GM12878 (cell line): ENCODE measurements at regions of chr17 and their contacts with region 1.

Region 1: DNA sequence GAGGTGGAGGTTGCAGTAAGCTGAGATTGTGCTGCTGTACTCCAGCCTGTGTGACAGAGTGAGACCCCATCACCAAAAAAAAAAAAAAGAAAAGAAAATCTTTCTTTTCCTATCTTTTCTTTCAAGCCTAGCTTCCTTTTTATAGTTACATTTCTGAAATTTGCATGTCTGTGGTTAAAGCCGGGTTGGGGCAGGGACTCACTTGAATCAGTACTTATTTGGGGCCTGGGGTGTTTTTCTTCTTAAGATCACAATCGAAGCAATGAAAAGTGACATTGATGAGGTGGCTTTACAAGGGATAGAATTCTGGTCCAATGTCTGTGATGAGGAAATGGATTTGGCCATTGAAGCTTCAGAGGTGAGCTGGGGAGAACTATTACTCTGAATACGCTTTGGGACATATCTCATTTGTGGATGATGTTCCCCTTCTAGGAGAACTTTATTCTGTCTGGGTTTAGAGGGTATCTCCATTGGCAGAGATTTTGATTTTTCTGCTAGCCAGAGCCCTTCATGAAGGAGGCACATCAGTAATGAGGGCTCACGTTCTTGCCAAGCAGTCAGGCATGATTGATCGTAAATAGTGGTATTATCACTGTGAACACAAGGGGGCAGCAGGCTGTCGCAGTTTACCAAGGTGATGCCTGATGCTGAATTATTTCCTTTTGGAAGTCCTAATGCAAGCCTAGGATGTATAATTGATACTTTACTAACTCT is 14.3 kb downstream of the KPNB1 start:
- DNase-seq: peak; percentile 41
- ATAC-seq: peak; percentile 84
- H3K4me3 ChIP-seq: 0 out of 2 replicates have a peak overlapping the region, but pooled peaks have one; percentile 35
- H3K27ac ChIP-seq: peak overlapping the region; percentile 50
- H3K4me1 ChIP-seq: peaks cover 32% of the 10 kb centered on the region
- H3K27me3 ChIP-seq: no peaks in the 10 kb centered on the region
- CTCF ChIP-seq: peak; percentile 71 to 87 (median 72)
- EP300 ChIP-seq: no peak
- POLR2A ChIP-seq: peak; percentile 56; the same call in 1 of the 2 replicates
- RAD21 ChIP-seq: peak; percentile 55

Region 2: DNA sequence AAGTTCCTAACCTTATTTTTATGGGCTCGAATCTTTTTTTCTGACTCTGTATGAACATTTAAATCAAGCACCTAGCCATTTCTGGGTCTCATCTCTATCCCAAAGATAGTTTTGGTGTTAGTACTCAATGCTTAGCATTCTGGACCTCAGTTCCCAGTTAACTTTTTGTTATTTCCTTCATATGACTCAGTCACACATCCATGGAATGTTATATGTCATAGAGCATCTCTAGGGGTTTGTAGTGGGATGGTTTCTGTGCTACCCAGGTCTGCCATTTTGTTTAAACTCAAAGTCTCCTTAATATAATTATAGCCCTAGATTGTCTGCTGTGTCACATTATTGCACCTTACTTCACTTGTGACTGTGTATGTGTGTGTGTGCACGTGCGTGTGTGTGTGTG is 250.2 kb before region 1 on chr17:
- CTCF ChIA-PET with region 1: no interaction called
- POLR2A ChIA-PET with region 1: no interaction called
- RAD21 ChIA-PET with region 1: no interaction called
- SMC1A ChIA-PET with region 1: no interaction called
- in situ Hi-C with region 1: no loop called
- intact Hi-C with region 1: no loop called
- DNase-seq: no peak
- ATAC-seq: no peak
- H3K4me3 ChIP-seq: no peak overlapping the region
- H3K27ac ChIP-seq: no peak overlapping the region
- H3K4me1 ChIP-seq: no peaks in the 10 kb centered on the region
- H3K27me3 ChIP-seq: no peaks in the 10 kb centered on the region
- CTCF ChIP-seq: no peak
- EP300 ChIP-seq: no peak
- POLR2A ChIP-seq: no peak
- RAD21 ChIP-seq: no peak

Region 3: GRCh38 chr17:47675380-47676198 is 11.5 kb after region 1 on chr17:
- CTCF ChIA-PET with region 1: interaction called, 47 read pairs
- POLR2A ChIA-PET with region 1: interaction called, 3 read pairs
- RAD21 ChIA-PET with region 1: interaction called, 5 read pairs
- SMC1A ChIA-PET with region 1: interaction called, 7 read pairs
- in situ Hi-C with region 1: no loop called
- intact Hi-C with region 1: no loop called
- DNase-seq: no peak
- ATAC-seq: no peak
- H3K4me3 ChIP-seq: no peak overlapping the region
- H3K27ac ChIP-seq: no peak overlapping the region
- H3K4me1 ChIP-seq: no peaks in the 10 kb centered on the region
- H3K27me3 ChIP-seq: no peaks in the 10 kb centered on the region
- CTCF ChIP-seq: no peak
- EP300 ChIP-seq: no peak
- POLR2A ChIP-seq: no peak; the same call in 1 of the 2 replicates
- RAD21 ChIP-seq: no peak

Region 4: DNA sequence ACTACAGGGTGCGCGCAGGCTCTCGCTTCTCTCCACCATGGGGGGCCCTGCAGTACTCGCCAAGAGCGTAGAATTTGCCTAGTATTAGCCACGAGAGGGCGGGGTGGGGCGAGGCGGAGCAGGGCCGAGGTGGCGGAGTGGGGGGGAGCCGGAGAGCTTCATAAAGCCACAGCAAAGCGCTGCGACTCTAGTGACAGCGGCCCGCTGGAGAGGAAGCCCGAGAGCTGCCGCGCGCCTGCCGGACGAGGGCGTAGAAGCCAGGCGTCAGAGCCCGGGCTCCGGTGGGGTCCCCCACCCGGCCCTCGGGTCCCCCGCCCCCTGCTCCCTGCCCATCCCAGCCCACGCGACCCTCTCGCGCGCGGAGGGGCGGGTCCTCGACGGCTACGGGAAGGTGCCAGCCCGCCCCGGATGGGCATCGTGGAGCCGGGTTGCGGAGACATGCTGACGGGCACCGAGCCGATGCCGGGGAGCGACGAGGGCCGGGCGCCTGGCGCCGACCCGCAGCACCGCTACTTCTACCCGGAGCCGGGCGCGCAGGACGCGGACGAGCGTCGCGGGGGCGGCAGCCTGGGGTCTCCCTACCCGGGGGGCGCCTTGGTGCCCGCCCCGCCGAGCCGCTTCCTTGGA is 69.1 kb after region 1 on chr17 and contains the start of gene TBX21:
- CTCF ChIA-PET with region 1: interaction called, 4 read pairs
- POLR2A ChIA-PET with region 1: no interaction called
- RAD21 ChIA-PET with region 1: interaction called, 7 read pairs
- SMC1A ChIA-PET with region 1: interaction called, 15 read pairs
- in situ Hi-C with region 1: no loop called
- intact Hi-C with region 1: loop called (anchors 10 kb)
- DNase-seq: no peak
- ATAC-seq: peak; percentile 80
- H3K4me3 ChIP-seq: peak within 1 kb of the TSS; percentile 92
- H3K27ac ChIP-seq: peak within 1 kb of the TSS; percentile 84
- H3K4me1 ChIP-seq: peaks cover 27% of the 10 kb centered on the region
- H3K27me3 ChIP-seq: 0 out of 4 replicates have a peak, but pooled peaks cover 0 to 1% of the 10 kb centered on the region in 2 experiments
- CTCF ChIP-seq: peak; percentile 34 to 64 (median 52)
- EP300 ChIP-seq: no peak
- POLR2A ChIP-seq: peak; percentile 95
- RAD21 ChIP-seq: peak; percentile 50
- polyA plus RNA-seq, gene TBX21: 0.63 to 1.8 TPM

Region 5: DNA sequence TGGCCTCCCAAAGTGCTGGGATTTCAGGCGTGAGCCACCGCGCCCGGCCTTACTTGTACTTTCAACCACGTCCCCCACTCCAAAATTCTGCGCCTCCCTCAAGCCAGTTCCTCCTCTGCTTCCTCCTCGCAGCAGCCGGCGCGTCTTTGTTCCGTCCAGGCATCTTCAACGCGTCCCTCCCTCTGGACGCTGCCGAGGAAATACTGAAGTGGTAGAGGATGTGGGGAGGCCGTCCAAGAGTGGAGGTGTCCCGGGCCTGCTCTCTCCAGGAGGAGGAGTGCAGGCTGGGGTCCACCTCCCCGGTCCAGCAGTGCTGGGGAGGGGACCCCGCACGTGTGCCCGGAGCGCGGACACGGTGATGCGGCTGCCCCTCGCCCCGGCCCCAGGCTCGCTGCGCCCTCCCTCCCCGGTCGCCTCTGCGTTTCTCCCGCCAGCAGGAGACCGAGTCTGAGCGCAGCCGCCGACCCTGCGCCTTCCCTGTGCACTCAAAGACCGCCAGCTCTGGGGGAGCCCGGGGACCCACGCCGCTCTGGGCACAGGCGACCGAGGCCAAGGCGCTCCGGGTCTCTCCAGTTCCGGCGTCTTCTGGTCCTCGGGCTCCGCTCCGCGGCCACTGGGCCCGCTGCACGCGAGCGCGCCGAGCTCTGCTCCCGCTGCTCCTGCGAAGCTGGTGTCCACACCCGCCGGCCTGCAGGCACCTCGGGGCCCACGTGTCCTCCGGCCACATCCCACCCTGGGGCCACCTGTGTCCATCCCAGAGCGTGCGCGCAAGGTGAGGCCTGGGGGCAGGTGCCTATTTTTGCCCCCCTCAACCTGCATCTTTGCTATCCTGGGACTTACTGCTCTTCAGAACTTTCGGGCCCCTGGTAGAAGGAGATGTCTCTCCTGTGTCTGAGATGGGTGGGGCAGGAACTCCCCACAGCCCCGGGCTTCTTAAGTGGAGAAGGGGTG is 125.8 kb after region 1 on chr17:
- CTCF ChIA-PET with region 1: interaction called, 12 read pairs
- POLR2A ChIA-PET with region 1: no interaction called
- RAD21 ChIA-PET with region 1: interaction called, 11 read pairs
- SMC1A ChIA-PET with region 1: interaction called, 4 read pairs
- in situ Hi-C with region 1: no loop called
- intact Hi-C with region 1: no loop called
- DNase-seq: no peak
- ATAC-seq: peak; percentile 96
- H3K4me3 ChIP-seq: no peak overlapping the region
- H3K27ac ChIP-seq: no peak overlapping the region
- H3K4me1 ChIP-seq: no peaks in the 10 kb centered on the region
- H3K27me3 ChIP-seq: peaks cover 4 to 7% of the 10 kb centered on the region in 2 experiments
- CTCF ChIP-seq: peak; percentile 37 to 63 (median 61)
- EP300 ChIP-seq: no peak
- POLR2A ChIP-seq: no peak
- RAD21 ChIP-seq: peak; percentile 50

Region 6: DNA sequence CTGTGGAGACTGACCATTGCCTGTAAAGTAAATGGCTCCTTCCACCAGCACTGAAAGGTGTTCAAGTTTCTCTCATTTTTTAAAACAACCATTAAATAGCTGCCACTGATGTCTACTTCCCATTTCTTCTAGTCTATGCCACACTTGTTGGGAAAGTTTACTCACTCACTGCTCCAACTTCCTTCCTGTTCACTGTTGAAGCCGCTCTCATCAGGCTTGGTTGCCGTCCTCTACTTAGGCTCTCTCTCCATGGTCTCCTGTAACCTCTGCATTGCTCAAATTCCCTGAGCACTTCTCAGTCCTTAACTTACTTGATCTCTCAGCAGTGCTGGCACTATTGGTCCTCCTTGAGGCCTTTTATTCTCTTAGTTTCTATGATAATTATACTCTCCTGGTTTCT is 475.9 kb after region 1 on chr17:
- CTCF ChIA-PET with region 1: no interaction called
- POLR2A ChIA-PET with region 1: no interaction called
- RAD21 ChIA-PET with region 1: no interaction called
- SMC1A ChIA-PET with region 1: no interaction called
- in situ Hi-C with region 1: no loop called
- intact Hi-C with region 1: no loop called
- DNase-seq: no peak
- ATAC-seq: no peak
- H3K4me3 ChIP-seq: no peak overlapping the region
- H3K27ac ChIP-seq: no peak overlapping the region
- H3K4me1 ChIP-seq: peaks cover 17% of the 10 kb centered on the region
- H3K27me3 ChIP-seq: no peaks in the 10 kb centered on the region
- CTCF ChIP-seq: no peak
- EP300 ChIP-seq: no peak
- POLR2A ChIP-seq: no peak
- RAD21 ChIP-seq: no peak